Activated T-helper 2 cell treated with anti-CD3 and anti-CD28 coated beads, Interferon-gamma antibody, Interleukin-2, Interleukin-4, amounts not matched to agents 10 μg/mL and 5 μg/mL and 100 μg/mL, durations not matched to agents 14 hours and 24 hours and 36 hours (primary cell): ENCODE measurements at regions of chr21 and their contacts with region 1.

Region 1: GRCh38 chr21:25607151-25608043 is at the start of gene MRPL39:
- DNase-seq: peak; percentile 84
- H3K4me3 Mint-ChIP-seq: peak within 1 kb of the TSS; percentile 100
- H3K27ac Mint-ChIP-seq: peak within 1 kb of the TSS; percentile 98
- H3K4me1 Mint-ChIP-seq: peaks cover 26% of the 10 kb centered on the region
- H3K27me3 Mint-ChIP-seq: no peaks in the 10 kb centered on the region
- total RNA-seq, gene MRPL39: 53.1 and 54.4 TPM in 2 replicates

Region 2: GRCh38 chr21:25639551-25640201 is 32.3 kb after region 1 on chr21:
- intact Hi-C with region 1: loop called (anchors 1 kb)
- DNase-seq: peak; percentile 14
- H3K4me3 Mint-ChIP-seq: peak overlapping the region; percentile 63
- H3K27ac Mint-ChIP-seq: no peak overlapping the region
- H3K4me1 Mint-ChIP-seq: peaks cover 31% of the 10 kb centered on the region
- H3K27me3 Mint-ChIP-seq: peaks cover 35% of the 10 kb centered on the region

Region 3: DNA sequence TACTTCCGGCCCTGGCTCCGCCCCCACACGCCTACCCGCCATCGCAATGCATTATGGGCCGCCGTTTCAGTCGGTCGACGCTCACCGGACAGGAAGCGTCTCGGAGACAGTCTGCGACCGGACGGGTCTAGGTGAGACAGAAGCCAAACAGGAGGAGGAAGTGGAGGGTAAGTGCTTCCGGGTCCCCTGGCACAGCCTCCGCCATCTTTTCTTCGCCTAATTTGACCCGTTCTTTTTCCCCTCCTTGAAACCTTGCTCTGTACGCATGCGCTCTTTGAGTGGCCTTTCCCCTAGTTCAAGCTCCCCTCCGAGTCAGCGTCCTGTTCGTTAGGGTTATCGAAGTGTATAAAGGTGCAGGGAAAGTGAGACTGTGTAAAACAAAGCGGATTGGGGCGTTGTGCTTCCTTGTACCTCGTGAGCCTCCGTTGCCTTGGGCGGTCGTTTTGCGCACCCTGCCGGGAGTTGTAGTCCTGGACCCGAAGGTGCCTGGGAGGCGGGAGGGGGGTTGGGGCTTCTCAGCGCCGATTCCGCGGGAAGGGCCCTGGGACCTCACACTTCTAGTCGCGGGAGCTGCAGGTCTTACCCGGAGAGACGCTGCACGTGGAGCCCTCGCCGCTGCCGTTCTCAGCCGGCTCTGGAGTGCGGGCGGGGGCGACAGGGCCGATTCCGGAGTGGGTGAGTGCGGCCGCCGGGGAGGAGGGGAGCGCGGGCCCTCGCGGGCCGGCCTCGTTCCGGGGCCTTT is 127.7 kb after region 1 on chr21 and contains the starts of genes ATP5PF and GABPA:
- intact Hi-C with region 1: loop called (anchors 1 kb)
- DNase-seq: peak; percentile 97
- H3K4me3 Mint-ChIP-seq: peak within 1 kb of the TSS; percentile 99
- H3K27ac Mint-ChIP-seq: peak within 1 kb of the TSS; percentile 100
- H3K4me1 Mint-ChIP-seq: peaks cover 34% of the 10 kb centered on the region
- H3K27me3 Mint-ChIP-seq: no peaks in the 10 kb centered on the region
- total RNA-seq, gene ATP5PF: 156 and 163 TPM in 2 replicates
- total RNA-seq, gene GABPA: 22.7 and 26.3 TPM in 2 replicates

Region 4: DNA sequence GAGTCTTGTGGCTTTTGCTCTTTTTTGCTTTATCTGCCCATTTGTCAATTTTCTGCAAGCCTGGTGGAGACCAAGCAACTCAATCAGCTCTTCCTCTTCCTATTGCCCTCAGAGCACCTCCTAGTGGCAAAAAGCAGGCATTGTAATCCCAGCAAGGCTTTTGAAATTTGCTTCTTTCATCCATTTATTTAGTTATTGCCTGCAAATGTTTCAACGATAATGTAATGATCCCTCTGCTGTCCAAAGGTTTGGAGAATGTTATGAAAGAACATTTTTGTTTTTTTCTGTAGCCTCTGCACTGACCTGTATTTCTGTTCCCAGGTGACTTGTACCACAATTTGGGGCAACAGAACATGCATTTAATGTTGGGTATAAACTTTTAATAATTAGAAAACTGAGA is 255.2 kb after region 1 on chr21:
- intact Hi-C with region 1: loop called (anchors 1 kb)
- DNase-seq: no peak
- H3K4me3 Mint-ChIP-seq: no peak overlapping the region
- H3K27ac Mint-ChIP-seq: no peak overlapping the region
- H3K4me1 Mint-ChIP-seq: peaks cover 8% of the 10 kb centered on the region
- H3K27me3 Mint-ChIP-seq: peaks cover 20% of the 10 kb centered on the region

Region 5: DNA sequence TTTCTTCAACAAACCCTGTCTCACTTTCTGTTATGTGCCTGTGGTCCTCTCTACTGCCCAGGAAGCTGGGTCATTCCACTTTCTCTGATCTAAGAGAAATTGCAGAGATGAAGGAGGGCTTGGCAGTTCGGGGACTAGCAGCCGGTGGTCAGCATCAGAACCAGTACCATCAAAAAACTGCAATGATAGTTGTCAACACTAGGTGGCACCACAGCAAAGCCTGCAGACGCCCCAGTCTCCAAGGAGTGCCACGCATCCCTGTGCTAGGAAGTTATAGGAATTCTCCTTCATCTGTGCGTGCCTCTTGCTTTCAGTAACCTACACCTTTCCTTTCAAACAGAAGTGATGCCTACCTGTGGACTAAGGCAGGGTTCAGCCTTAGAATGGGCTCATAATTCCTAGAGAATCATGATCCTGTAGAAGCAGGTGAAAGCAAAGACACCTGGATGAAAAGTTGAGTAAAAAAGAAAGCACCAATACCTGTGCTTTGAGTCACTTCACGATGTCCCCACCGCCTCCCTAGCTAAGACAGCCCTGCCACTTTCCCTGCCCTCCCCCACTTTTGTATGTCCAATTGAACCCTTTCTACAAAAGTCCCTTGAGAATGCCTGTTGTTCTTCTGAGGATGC is 1108.6 kb after region 1 on chr21:
- intact Hi-C with region 1: loop called (anchors 1 kb)
- DNase-seq: no peak
- H3K4me3 Mint-ChIP-seq: no peak overlapping the region
- H3K27ac Mint-ChIP-seq: no peak overlapping the region
- H3K4me1 Mint-ChIP-seq: no peaks in the 10 kb centered on the region
- H3K27me3 Mint-ChIP-seq: no peaks in the 10 kb centered on the region